Natural killer cell (primary cell): ENCODE measurements at regions of chr3 and their contacts with region 1.

Region 1: DNA sequence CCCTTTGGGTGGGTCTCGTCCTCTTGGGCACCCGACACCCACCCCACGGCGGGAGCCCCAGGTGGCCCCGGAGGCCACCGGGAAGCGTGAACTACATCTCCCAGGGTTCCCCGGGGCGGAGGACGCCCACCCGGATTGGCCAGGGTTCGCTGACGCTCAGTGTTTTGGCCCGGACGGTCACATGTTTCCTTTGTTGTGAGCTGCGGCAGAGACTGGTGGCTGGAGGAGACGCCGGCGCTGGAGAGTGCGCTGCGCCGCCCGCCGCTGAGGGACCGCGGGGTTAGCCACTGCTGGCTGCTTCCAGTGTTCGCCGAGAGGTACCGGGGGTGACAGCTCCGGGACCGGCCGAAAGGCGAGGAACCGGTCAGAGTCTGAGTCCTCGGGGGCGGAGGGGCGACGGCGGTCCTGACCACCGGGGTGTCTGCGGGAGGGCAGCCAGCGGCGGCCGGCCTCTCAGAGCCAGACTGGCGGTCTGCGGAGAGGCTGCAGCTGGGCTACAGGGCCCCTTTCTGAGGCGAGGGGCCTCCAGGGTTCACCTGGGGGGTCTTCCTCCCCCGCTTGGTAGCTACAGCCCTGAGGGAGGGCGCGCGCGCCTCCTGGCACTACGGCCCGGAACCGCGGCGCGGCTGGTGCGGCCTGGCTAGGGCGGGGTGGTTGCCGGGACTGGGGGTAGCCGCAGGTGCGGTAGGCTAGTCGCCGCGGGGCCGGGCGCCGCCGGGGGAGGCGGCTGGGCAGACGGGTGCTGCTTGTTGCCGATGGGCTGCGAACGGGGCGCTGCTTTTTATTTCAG is at the start of gene KLHL24:
- DNase-seq: peak; percentile 85 to 94
- ATAC-seq: peak; percentile 68 to 83 (median 75)
- H3K4me3 ChIP-seq: peak within 1 kb of the TSS; percentile 80
- H3K4me3 Mint-ChIP-seq: peak within 1 kb of the TSS; percentile 96
- H3K27ac ChIP-seq: peak within 1 kb of the TSS; percentile 96
- H3K27ac Mint-ChIP-seq: peak within 1 kb of the TSS; percentile 92 to 98
- H3K4me1 ChIP-seq: peaks cover 28% of the 10 kb centered on the region
- H3K4me1 Mint-ChIP-seq: peaks cover 26 to 35% of the 10 kb centered on the region in 2 donors
- H3K27me3 ChIP-seq: no peaks in the 10 kb centered on the region
- H3K27me3 Mint-ChIP-seq: no peaks in the 10 kb centered on the region
- CTCF ChIP-seq: no peak
- total RNA-seq, gene KLHL24: 140 to 189 (median 177) TPM

Region 2: DNA sequence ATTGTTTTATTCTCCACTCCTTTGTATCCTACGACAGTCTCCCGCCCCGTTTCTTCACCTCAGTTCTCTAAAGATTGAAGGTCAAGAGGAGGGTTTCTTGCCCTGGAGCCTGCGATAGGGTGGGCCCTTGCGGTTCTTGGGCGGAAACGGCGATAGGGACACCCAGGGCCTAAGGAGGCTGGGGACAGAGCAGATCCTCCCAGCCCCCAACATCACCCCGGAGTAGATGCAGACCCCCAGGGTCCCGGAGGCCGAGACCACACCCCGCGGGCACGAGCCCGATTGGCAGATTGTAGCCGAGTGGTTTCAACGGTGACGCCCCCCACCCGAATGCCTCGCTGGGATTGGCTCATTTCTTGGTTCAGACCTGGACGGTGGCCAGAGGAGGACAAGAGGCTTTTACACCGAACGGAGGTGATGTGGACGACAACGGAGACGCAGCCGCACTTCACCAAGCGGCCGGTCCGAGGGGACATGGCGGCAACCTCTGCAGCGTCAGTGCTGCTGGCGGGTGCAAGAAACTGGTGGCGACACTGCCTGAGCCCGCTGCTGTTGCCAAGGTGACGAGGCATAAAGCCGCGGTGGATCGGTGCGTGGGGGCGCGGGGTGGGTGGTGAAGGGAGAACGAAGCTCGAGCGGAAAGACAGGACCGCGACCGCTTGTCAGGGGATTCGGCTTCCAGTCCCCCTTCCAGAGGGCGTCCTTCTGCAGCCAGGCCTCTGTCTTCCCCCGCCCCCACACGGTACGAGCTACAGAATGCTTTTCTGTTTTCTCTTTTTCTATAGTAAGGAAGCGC is 188.2 kb before region 1 on chr3:
- intact Hi-C with region 1: loop called (anchors 1 kb)
- DNase-seq: peak; percentile 67 to 73
- ATAC-seq: peak; percentile 87 to 89 (median 87)
- H3K4me3 ChIP-seq: peak overlapping the region; percentile 97
- H3K4me3 Mint-ChIP-seq: peak overlapping the region; percentile 97
- H3K27ac ChIP-seq: peak overlapping the region; percentile 74
- H3K27ac Mint-ChIP-seq: peak overlapping the region; percentile 75 to 89
- H3K4me1 ChIP-seq: peaks cover 6% of the 10 kb centered on the region
- H3K4me1 Mint-ChIP-seq: peaks cover 25 to 29% of the 10 kb centered on the region in 2 donors
- H3K27me3 ChIP-seq: no peaks in the 10 kb centered on the region
- H3K27me3 Mint-ChIP-seq: peaks cover 0 to 6% of the 10 kb centered on the region in 2 donors
- CTCF ChIP-seq: no peak

Region 3: GRCh38 chr3:183537295-183537730 is 98.3 kb before region 1 on chr3:
- intact Hi-C with region 1: no loop called
- DNase-seq: no peak
- ATAC-seq: peak in 1 of 3 donors; percentile 63
- H3K4me3 ChIP-seq: no peak overlapping the region
- H3K4me3 Mint-ChIP-seq: no peak overlapping the region
- H3K27ac ChIP-seq: peak overlapping the region; percentile 32
- H3K27ac Mint-ChIP-seq: peak overlapping the region in 1 of 2 donors; percentile 0
- H3K4me1 ChIP-seq: peaks cover 76% of the 10 kb centered on the region
- H3K4me1 Mint-ChIP-seq: peaks cover 42 to 60% of the 10 kb centered on the region in 2 donors
- H3K27me3 ChIP-seq: no peaks in the 10 kb centered on the region
- H3K27me3 Mint-ChIP-seq: no peaks in the 10 kb centered on the region
- CTCF ChIP-seq: no peak

Region 4: DNA sequence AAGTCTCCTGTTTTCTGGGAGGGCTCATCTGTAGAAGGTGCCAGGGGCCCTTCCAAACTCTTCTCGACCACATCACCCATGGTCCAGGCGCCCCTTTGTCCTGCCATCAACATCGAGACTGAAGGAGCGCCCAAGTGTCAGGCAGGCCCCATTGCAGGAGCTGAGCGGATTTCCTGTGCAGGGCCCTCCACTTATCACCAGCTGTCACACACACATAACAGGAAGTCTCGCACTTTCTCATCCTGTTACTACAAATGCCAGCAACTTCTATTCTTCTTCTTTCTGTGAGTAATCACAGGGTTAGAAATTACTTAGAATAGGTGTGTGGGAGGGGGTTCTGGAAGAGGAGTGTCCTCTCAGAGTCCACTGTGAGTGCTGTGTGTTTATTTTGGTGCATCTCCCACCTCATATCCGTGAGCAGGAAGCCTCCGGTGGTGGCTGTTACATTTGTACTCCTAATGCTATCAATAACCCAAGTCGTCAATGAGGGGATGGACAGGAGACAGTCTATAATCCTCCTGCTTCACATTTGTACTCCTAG is 80.0 kb before region 1 on chr3 and contains the start of gene KLHL6:
- intact Hi-C with region 1: loop called (anchors 2 kb)
- DNase-seq: peak; percentile 69 to 86
- ATAC-seq: peak; percentile 89 to 96 (median 96)
- H3K4me3 ChIP-seq: peak within 1 kb of the TSS; percentile 57
- H3K4me3 Mint-ChIP-seq: peak within 1 kb of the TSS; percentile 98
- H3K27ac ChIP-seq: peak within 1 kb of the TSS; percentile 80
- H3K27ac Mint-ChIP-seq: peak within 1 kb of the TSS; percentile 97 to 99
- H3K4me1 ChIP-seq: peaks cover 36% of the 10 kb centered on the region
- H3K4me1 Mint-ChIP-seq: peaks cover 47 to 52% of the 10 kb centered on the region in 2 donors
- H3K27me3 ChIP-seq: no peaks in the 10 kb centered on the region
- H3K27me3 Mint-ChIP-seq: no peaks in the 10 kb centered on the region
- CTCF ChIP-seq: no peak
- total RNA-seq, gene KLHL6: 10.9 to 17.3 (median 13.6) TPM

Region 5: GRCh38 chr3:183664913-183665381 is 29.3 kb after region 1 on chr3:
- intact Hi-C with region 1: loop called (anchors 5 kb)
- DNase-seq: no peak
- ATAC-seq: no peak
- H3K4me3 ChIP-seq: no peak overlapping the region
- H3K4me3 Mint-ChIP-seq: no peak overlapping the region
- H3K27ac ChIP-seq: no peak overlapping the region
- H3K27ac Mint-ChIP-seq: no peak overlapping the region
- H3K4me1 ChIP-seq: peaks cover 3% of the 10 kb centered on the region
- H3K4me1 Mint-ChIP-seq: peaks cover 4 to 6% of the 10 kb centered on the region in 2 donors
- H3K27me3 ChIP-seq: no peaks in the 10 kb centered on the region
- H3K27me3 Mint-ChIP-seq: no peaks in the 10 kb centered on the region
- CTCF ChIP-seq: no peak

Region 6: GRCh38 chr3:183697610-183698317 is 62.1 kb after region 1 on chr3 and contains the start of gene YEATS2:
- intact Hi-C with region 1: loop called (anchors 2 kb)
- DNase-seq: peak; percentile 64 to 86
- ATAC-seq: peak; percentile 90 to 94 (median 90)
- H3K4me3 ChIP-seq: peak within 1 kb of the TSS; percentile 94
- H3K4me3 Mint-ChIP-seq: peak within 1 kb of the TSS; percentile 92
- H3K27ac ChIP-seq: peak within 1 kb of the TSS; percentile 68
- H3K27ac Mint-ChIP-seq: peak within 1 kb of the TSS; percentile 66 to 83
- H3K4me1 ChIP-seq: peaks cover 9% of the 10 kb centered on the region
- H3K4me1 Mint-ChIP-seq: peaks cover 29 to 36% of the 10 kb centered on the region in 2 donors
- H3K27me3 ChIP-seq: no peaks in the 10 kb centered on the region
- H3K27me3 Mint-ChIP-seq: no peaks in the 10 kb centered on the region
- CTCF ChIP-seq: no peak
- total RNA-seq, gene YEATS2: 23.1 to 25.8 (median 25.2) TPM

Region 7: GRCh38 chr3:185585859-185586685 is 1950.4 kb after region 1 on chr3 and contains the start of gene SENP2:
- intact Hi-C with region 1: loop called (anchors 10 kb)
- DNase-seq: peak; percentile 100
- ATAC-seq: peak; percentile 80 to 93 (median 85)
- H3K4me3 ChIP-seq: peak within 1 kb of the TSS; percentile 98
- H3K4me3 Mint-ChIP-seq: peak within 1 kb of the TSS; percentile 92
- H3K27ac ChIP-seq: peak within 1 kb of the TSS; percentile 99
- H3K27ac Mint-ChIP-seq: peak within 1 kb of the TSS; percentile 93 to 98
- H3K4me1 ChIP-seq: peaks cover 40% of the 10 kb centered on the region
- H3K4me1 Mint-ChIP-seq: peaks cover 47 to 50% of the 10 kb centered on the region in 2 donors
- H3K27me3 ChIP-seq: no peaks in the 10 kb centered on the region
- H3K27me3 Mint-ChIP-seq: no peaks in the 10 kb centered on the region
- CTCF ChIP-seq: no peak
- total RNA-seq, gene SENP2: 57.8 to 59.8 (median 58.7) TPM